ENCODE measurements at regions of chr19 and their contacts with region 1.

Region 1: GRCh38 chr19:50329146-50329925 is at the start of gene KCNC3:
- DNase-seq: peak; percentile 91
- ATAC-seq: peak; percentile 64
- H3K4me3 Mint-ChIP-seq: peak within 1 kb of the TSS; percentile 93
- H3K27ac Mint-ChIP-seq: peak within 1 kb of the TSS; percentile 98
- H3K4me1 Mint-ChIP-seq: peaks cover 78% of the 10 kb centered on the region
- H3K27me3 Mint-ChIP-seq: peaks cover 5% of the 10 kb centered on the region
- CTCF ChIP-seq: no peak
- total RNA-seq, gene KCNC3: 34.5 and 44.3 TPM in 2 replicates

Region 2: DNA sequence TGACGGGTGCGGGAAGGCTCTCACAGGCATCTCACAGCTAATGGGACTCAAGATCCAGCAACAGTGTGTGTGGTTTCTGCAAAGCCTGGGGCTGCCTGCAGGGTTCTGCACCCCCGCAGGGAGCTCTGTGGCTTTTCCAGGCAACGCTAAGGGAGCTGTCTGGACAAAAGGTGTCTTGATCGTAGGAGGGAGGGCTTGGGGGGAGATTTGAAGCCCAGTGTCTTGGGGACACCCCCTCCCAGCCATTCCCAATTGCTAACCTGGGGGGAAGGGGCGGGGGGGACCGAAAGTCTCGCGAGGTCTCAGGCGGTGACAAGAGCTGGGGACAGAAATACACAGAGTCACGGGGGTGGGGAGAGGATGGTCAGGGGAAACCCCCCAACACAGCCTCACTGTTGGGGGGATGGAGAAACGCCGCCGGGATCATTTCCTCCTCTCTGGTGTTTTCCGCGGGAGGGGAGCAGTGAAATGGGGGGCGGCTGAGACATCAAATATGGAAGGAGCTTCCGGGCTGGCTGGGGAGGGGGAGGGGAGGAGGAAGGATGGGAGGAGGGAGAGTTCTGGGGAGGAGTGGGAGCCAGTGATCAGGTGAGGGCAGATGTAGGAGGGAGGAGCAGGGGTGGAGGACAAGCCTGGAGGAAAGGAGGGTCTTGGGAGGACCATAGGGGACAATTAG is 13.4 kb before region 1 on chr19:
- CTCF ChIA-PET with region 1: no interaction called
- POLR2A ChIA-PET with region 1: interaction called, 24 read pairs
- intact Hi-C with region 1: no loop called
- DNase-seq: no peak
- ATAC-seq: peak; percentile 58
- H3K4me3 Mint-ChIP-seq: peak overlapping the region; percentile 52
- H3K27ac Mint-ChIP-seq: no peak overlapping the region
- H3K4me1 Mint-ChIP-seq: peaks cover 25% of the 10 kb centered on the region
- H3K27me3 Mint-ChIP-seq: peaks cover 33% of the 10 kb centered on the region
- CTCF ChIP-seq: no peak

Region 3: DNA sequence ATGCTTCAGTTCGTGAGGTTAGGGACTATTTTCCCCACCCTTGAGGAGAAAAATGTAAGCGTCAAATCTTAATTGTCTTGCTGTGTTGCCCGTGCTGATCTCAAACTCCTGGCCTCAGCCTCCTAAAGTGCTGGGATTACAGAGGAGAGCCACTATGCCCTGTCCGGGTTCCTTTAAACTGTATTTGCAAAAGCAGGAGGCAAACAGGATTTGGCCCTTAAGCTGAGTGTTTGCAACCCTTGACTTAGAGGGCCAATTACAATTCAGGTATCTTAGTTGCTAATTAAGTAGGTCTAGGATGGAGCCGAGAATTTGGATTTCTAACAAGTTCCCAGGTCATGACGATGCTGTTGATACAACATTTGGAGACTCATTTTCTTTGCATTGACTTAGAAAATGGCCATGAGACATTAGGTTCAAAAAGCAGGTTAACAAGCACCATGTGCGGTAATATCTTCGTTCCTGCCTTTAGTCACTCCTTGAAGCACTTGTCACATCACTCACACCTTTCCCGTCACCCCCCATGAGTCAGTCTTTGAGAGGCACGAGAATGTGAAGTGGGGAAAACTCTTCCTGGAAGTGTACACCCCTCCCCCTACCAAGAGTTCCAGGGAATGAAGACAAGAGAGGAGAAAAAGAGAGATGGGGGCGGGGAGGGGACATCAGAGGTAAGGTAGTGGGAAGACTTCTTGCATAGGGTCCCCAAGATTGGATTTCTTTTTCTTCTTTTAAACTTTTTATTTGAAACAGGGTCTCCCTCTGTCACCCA is 33.5 kb after region 1 on chr19:
- CTCF ChIA-PET with region 1: interaction called, 20 read pairs
- POLR2A ChIA-PET with region 1: interaction called, 60 read pairs
- intact Hi-C with region 1: no loop called
- DNase-seq: no peak
- ATAC-seq: no peak
- H3K4me3 Mint-ChIP-seq: no peak overlapping the region
- H3K27ac Mint-ChIP-seq: no peak overlapping the region
- H3K4me1 Mint-ChIP-seq: peaks cover 70% of the 10 kb centered on the region
- H3K27me3 Mint-ChIP-seq: no peaks in the 10 kb centered on the region
- CTCF ChIP-seq: no peak

Region 4: DNA sequence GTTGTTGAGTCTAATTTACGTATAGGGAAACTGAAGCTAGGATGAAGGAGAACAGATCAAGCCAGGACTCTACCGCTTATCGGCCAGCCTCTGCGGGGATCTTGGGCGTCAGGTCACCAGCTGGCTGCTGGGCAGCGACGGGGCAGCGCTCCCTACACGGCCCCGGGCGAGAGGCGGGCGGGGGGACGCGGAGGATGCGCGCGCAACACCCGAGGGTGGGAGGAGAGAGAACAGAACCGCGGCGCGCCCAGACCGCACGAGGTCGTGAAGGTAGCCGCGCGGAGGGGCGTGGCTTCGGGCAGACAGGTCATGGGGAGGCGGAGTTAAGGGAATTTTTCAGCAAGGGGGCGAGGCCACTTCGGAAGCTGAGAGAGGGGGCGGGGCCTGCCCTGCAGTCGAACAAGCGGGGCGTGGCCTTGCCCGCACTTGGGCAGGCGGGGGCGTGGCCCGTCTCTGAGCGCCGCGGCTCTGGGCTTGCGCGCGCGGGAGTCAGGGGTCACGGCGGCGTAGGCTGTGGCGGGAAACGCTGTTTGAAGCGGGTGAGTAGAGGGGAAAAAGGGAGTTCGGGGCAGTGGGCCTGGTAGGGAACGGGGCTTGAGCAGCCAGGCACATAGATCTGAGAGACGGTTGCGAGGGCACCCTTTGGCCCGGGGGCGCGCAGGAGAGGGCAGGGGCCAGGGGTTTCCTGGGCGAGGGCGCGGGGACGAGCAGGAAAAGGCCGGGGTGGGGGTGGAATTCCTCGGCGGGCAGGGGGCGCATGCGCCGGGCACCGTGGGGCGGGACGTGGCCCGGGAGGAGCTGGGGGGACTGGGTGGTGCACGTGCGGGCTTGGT is 54.7 kb after region 1 on chr19 and contains the start of gene POLD1:
- CTCF ChIA-PET with region 1: no interaction called
- POLR2A ChIA-PET with region 1: interaction called, 9 read pairs
- intact Hi-C with region 1: loop called (anchors 1 kb)
- DNase-seq: peak; percentile 97
- ATAC-seq: peak; percentile 94
- H3K4me3 Mint-ChIP-seq: peak within 1 kb of the TSS; percentile 96
- H3K27ac Mint-ChIP-seq: peak within 1 kb of the TSS; percentile 85
- H3K4me1 Mint-ChIP-seq: peaks cover 28% of the 10 kb centered on the region
- H3K27me3 Mint-ChIP-seq: no peaks in the 10 kb centered on the region
- CTCF ChIP-seq: no peak
- total RNA-seq, gene POLD1: 58.8 and 65.5 TPM in 2 replicates

Region 5: GRCh38 chr19:50431343-50432220 is 102.2 kb after region 1 on chr19:
- CTCF ChIA-PET with region 1: no interaction called
- POLR2A ChIA-PET with region 1: interaction called, 16 read pairs
- intact Hi-C with region 1: loop called (anchors 1 kb)
- DNase-seq: peak; percentile 91
- ATAC-seq: peak; percentile 64
- H3K4me3 Mint-ChIP-seq: peak overlapping the region; percentile 89
- H3K27ac Mint-ChIP-seq: peak overlapping the region; percentile 95
- H3K4me1 Mint-ChIP-seq: peaks cover 95% of the 10 kb centered on the region
- H3K27me3 Mint-ChIP-seq: no peaks in the 10 kb centered on the region
- CTCF ChIP-seq: no peak

Region 6: DNA sequence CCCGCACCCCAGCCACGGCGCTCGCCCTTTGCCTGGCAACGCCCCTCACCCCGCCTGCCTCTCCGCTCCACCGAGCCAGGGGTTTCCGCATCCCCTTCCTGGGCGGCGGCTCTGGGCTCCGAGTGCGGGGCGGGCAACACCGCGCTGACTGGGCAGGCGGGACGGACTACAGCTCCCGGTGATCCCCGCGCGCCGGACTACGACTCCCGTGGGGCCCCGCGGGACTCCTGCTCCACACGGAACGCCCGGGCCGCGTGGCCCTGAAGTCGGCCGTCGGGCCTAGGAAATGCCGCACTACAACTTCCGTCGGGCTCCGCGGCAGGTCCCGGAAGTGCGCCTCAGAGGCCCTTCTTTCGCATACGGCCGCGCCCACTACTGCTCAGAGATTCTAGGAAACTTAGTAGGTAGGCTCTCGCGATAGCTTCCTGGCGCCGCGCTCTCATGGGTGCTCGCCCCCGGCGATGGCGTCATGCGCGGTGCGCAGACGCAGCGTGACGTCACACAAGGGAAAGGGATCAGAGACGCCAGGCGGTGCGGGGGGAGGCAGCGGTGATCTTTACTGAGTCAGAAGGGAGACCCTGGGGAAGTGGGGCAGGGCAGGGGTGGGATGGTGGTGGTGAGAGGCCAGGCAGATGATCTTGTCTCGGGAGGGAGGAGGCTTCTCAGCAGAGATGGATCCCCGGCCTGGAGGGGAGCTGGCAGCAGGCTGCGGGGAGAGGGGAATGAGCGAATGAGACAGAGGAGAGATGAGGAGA is 181.9 kb after region 1 on chr19 and contains the start of gene JOSD2:
- CTCF ChIA-PET with region 1: no interaction called
- POLR2A ChIA-PET with region 1: interaction called, 7 read pairs
- intact Hi-C with region 1: loop called (anchors 1 kb)
- DNase-seq: peak; percentile 96
- ATAC-seq: peak; percentile 94
- H3K4me3 Mint-ChIP-seq: peak within 1 kb of the TSS; percentile 89
- H3K27ac Mint-ChIP-seq: peak within 1 kb of the TSS; percentile 93
- H3K4me1 Mint-ChIP-seq: peaks cover 13% of the 10 kb centered on the region
- H3K27me3 Mint-ChIP-seq: peaks cover 5% of the 10 kb centered on the region
- CTCF ChIP-seq: no peak
- total RNA-seq, gene JOSD2: 21.0 and 23.7 TPM in 2 replicates